ENCODE measurements at regions of chr3 and their contacts with region 1.

Region 1: GRCh38 chr3:124174910-124175874 is 183.3 kb upstream of the ROPN1 start:
- DNase-seq: no peak
- H3K4me3 ChIP-seq: no peak overlapping the region
- H3K27ac ChIP-seq: no peak overlapping the region
- H3K4me1 ChIP-seq: no peaks in the 10 kb centered on the region
- H3K27me3 ChIP-seq: no peaks in the 10 kb centered on the region
- CTCF ChIP-seq: no peak

Region 2: DNA sequence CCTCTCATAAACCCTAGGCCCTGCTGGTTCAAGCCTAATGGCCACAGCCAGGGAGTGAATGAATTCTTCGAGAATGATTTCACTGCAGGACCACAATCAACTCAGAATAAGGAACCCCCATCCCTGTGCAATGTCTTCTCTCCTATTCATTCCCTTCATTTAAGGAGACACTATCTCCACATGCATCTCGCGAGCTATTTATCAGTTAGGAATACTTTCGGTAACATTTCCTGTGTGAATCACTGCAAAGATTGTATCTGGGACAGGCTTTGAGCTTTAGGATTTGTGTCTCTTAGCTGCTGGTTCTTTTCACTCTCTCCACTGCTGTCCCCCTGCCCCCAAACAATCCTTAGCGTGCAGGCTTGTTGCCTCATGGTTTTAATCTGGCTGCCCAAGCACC is 385.4 kb before region 1 on chr3:
- CTCF ChIA-PET with region 1: no interaction called
- POLR2A ChIA-PET with region 1: no interaction called
- intact Hi-C with region 1: loop called (anchors 10 kb)
- DNase-seq: peak; percentile 92
- H3K4me3 ChIP-seq: no peak overlapping the region
- H3K27ac ChIP-seq: no peak overlapping the region
- H3K4me1 ChIP-seq: peaks cover 37% of the 10 kb centered on the region
- H3K27me3 ChIP-seq: no peaks in the 10 kb centered on the region
- CTCF ChIP-seq: no peak